K562 (cell line): ENCODE measurements at regions of chr14 and their contacts with region 1.

Region 1: DNA sequence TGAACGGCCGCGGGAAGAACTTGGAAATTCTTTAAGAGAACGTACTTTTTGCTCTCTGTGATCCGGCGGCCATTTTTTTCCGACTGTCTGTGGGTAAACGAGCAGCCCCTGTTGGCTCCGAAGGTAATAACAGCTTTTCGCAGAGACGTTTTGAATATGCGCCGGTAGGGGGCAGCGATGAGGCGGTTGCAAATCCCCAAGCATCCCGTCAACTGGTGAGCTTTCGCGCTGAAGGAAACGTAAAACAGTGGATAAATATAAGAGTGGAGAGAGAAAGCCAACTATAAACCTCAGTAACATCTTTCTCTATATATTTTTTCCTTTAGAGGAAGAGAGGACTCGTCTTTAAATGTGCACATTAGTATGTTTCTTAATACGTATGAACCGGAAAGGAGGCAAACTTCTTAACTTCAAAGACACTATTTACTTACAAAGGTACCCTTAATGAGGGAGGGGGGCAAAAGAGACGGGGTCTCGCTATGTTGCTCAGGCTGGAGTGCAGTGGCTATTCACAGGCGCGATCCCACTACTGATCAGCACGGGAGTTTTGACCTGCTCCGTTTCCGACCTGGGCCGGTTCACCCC is 9.6 kb upstream of the NEMF start:
- DNase-seq: peak; percentile 27 to 85 (median 41)
- ATAC-seq: peak; percentile 18
- H3K4me3 ChIP-seq: peak overlapping the region; percentile 58
- H3K27ac ChIP-seq: peak overlapping the region; percentile 98
- H3K4me1 ChIP-seq: peaks cover 7 to 29% of the 10 kb centered on the region in 2 experiments; a peak in 4 of 5 replicates
- H3K27me3 ChIP-seq: no peaks in the 10 kb centered on the region
- CTCF ChIP-seq: peak; percentile 100
- EP300 ChIP-seq: peak; percentile 14; the same call in 1 of the 2 replicates
- POLR2A ChIP-seq: no peak; the same call in 1 of the 2 replicates
- RAD21 ChIP-seq: peak; percentile 46 to 77

Region 2: DNA sequence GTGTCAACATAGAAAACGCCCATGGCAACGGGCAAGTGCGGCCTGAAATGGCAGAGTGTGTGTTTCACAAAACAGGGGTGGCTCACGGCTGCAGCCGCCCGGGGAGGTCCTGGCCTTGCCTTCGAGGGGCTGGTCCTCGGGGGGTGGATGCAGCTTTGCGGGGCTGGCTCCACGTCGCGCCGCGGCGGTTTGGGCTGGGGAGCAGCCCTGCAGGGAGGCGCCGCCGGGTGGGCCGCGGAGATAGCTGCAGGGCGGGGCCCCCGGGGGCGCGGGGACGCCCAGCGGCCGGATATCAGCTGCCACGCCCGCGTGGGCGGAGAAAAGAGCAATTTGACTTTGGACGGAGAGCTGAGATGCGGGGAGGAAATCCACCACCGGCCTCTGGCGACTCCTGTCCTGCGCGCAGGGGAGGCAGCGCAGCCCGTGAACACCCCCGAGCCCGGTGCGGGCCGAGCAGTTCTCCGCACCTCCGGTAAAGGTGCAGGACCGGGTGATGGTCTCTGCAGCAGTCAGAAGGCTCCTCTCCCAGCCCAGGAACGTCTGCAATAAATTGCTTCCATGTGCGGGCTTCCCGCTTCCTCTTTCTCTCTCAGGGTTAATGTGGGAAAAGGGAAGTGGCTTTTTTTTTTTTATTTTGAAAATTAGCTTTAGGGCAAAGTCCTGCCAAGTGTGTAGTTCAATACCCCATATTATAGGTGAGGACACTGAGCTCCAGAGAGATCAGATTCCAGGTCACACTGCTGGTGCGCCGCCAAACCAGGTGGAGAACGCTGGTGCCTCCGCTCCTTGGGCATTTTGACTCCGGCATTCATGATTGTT is 141.2 kb after region 1 on chr14:
- CTCF ChIA-PET with region 1: no interaction called
- POLR2A ChIA-PET with region 1: interaction called, 8 read pairs
- in situ Hi-C with region 1: no loop called
- intact Hi-C with region 1: loop called (anchors 2 kb)
- DNase-seq: peak; percentile 92 to 94 (median 94)
- ATAC-seq: peak; percentile 84
- H3K4me3 ChIP-seq: peak overlapping the region; percentile 46
- H3K27ac ChIP-seq: peak overlapping the region; percentile 92
- H3K4me1 ChIP-seq: peaks cover 50 to 54% of the 10 kb centered on the region in 2 experiments
- H3K27me3 ChIP-seq: no peaks in the 10 kb centered on the region
- CTCF ChIP-seq: peak in 1 of 3 experiments; percentile 36; a peak in 1 of 6 replicates
- EP300 ChIP-seq: peak; percentile 85
- POLR2A ChIP-seq: peak; percentile 75
- RAD21 ChIP-seq: peak; percentile 36 to 41; a peak in 3 of 4 replicates

Region 3: DNA sequence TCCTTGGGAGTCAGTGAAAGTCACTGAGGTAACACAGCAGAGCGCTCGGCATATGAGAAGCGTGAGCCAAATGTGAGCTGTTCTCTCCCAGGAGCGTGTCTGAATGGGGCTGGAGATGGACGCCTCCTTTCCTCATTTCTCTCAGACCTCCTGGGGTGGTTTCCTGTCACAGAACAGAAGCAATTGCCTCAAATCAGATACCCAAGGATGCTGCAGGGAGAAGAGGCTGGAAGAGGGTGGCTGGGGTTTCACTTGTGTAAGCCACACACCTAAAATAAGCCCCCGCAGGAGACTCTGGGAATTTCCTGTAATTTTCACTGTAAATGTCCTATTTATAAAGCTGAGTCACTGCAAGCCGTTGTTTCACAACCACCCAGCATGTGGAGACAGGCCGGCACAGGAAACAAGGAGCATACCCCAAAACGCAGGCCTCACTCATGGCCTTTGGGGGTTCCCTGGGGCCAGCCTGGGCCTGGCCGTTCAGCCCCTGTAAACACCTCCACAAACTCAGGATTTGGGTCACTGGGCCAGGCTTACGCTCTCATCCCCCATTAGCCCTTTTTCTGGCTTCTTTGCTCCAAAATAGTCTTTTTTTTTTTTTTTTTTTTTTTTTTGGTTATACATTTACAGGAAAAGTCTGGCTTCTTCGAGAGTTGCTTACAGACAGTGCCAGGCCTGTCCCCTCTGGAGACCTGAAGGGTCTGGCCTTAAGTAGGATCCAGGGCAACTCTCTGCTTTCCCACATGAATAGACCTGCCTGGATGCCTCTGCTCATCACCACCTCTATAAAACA is 198.9 kb after region 1 on chr14:
- CTCF ChIA-PET with region 1: no interaction called
- POLR2A ChIA-PET with region 1: interaction called, 8 read pairs
- in situ Hi-C with region 1: no loop called
- intact Hi-C with region 1: loop called (anchors 2 kb)
- DNase-seq: peak; percentile 60 to 82 (median 71)
- ATAC-seq: peak; percentile 72
- H3K4me3 ChIP-seq: no peak overlapping the region
- H3K27ac ChIP-seq: peak overlapping the region; percentile 90
- H3K4me1 ChIP-seq: peaks cover 39 to 68% of the 10 kb centered on the region in 2 experiments
- H3K27me3 ChIP-seq: no peaks in the 10 kb centered on the region
- CTCF ChIP-seq: peak; percentile 8 to 17 (median 10); a peak in 1 of 6 replicates
- EP300 ChIP-seq: peak; percentile 81
- POLR2A ChIP-seq: no peak
- RAD21 ChIP-seq: no peak; a peak in 1 of 4 replicates

Region 4: DNA sequence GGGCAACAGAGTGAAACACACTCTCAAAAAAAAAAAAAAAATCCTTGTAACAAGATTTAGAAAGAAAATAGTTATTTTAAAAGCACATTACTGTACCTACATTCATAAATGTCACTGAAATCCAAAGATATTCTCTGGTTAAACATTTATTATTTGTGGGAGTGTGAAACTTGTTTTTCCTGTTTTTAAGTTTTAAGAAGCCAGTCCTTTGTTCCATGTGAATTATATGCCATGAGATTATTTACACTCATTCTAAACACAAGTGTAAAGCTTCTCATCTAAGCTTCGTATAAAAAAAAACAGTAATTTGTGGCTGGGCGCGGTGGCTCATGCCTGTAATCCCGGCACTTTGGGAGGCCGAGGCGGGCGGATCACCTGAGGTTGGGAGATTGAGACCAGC is 239.2 kb after region 1 on chr14:
- CTCF ChIA-PET with region 1: interaction called, 17 read pairs
- POLR2A ChIA-PET with region 1: interaction called, 12 read pairs
- in situ Hi-C with region 1: loop called (anchors 5 kb)
- intact Hi-C with region 1: loop called (anchors 1 kb)
- DNase-seq: no peak
- ATAC-seq: no peak
- H3K4me3 ChIP-seq: no peak overlapping the region
- H3K27ac ChIP-seq: no peak overlapping the region
- H3K4me1 ChIP-seq: no peaks in the 10 kb centered on the region; a peak in 1 of 5 replicates
- H3K27me3 ChIP-seq: no peaks in the 10 kb centered on the region
- CTCF ChIP-seq: no peak
- EP300 ChIP-seq: no peak
- POLR2A ChIP-seq: no peak
- RAD21 ChIP-seq: no peak

Region 5: DNA sequence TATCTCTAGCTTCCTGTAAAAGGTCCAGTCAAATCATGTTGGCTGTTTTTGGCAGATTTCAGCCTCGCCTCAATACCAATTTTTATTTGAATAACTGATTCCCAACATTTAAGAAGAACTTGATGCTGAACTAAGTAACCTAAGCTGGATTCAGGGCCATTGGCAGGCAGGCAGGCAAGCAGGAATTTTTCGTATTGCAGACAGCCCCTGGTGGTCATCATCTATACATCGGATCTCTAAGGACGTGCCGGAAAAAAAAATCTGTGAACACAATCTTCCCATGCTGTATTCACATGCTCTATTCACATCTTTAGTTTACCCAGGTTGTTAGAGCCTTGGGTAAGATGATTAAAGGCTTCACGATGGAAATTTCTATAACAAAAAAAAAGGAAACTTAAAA is 247.2 kb after region 1 on chr14:
- CTCF ChIA-PET with region 1: interaction called, 17 read pairs
- POLR2A ChIA-PET with region 1: interaction called, 12 read pairs
- in situ Hi-C with region 1: loop called (anchors 5 kb)
- intact Hi-C with region 1: loop called (anchors 1 kb)
- DNase-seq: no peak
- ATAC-seq: no peak
- H3K4me3 ChIP-seq: no peak overlapping the region
- H3K27ac ChIP-seq: no peak overlapping the region
- H3K4me1 ChIP-seq: no peaks in the 10 kb centered on the region
- H3K27me3 ChIP-seq: no peaks in the 10 kb centered on the region
- CTCF ChIP-seq: no peak
- EP300 ChIP-seq: no peak
- POLR2A ChIP-seq: no peak
- RAD21 ChIP-seq: no peak